A673 (cell line): ENCODE measurements at regions of chr6 and their contacts with region 1.

Region 1: GRCh38 chr6:27545271-27546046 is 72.6 kb upstream of the ZNF184 start:
- DNase-seq: peak; percentile 87
- H3K4me3 ChIP-seq: peak overlapping the region; percentile 48
- H3K27ac ChIP-seq: no peak overlapping the region
- H3K4me1 ChIP-seq: no peaks in the 10 kb centered on the region
- H3K27me3 ChIP-seq: no peaks in the 10 kb centered on the region
- CTCF ChIP-seq: no peak

Region 2: DNA sequence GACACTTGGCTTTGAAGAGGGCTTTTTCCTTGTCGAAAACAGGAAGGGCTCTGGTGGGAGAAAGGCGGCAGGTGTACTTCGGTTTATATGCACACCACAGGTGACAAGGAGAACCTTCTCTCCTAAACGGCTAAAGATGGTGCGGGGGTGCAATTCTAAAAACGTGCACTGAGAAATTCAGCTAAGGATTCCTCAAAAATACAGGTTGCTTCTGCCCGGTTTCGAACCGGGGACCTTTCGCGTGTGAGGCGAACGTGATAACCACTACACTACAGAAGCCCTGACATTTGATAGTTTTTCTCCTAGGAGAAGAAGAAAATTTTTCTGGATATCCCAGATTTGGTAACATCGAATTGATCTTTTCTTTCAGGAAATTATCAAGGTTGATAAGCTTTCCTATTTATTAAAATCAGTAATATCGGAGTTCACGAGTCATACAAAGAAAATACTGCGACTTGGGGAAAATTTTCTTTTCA is 265.4 kb before region 1 on chr6:
- CTCF ChIA-PET with region 1: no interaction called
- POLR2A ChIA-PET with region 1: no interaction called
- intact Hi-C with region 1: no loop called
- DNase-seq: peak; percentile 82
- H3K4me3 ChIP-seq: peak overlapping the region; percentile 54
- H3K27ac ChIP-seq: peak overlapping the region; percentile 26
- H3K4me1 ChIP-seq: peaks cover 6% of the 10 kb centered on the region
- H3K27me3 ChIP-seq: no peaks in the 10 kb centered on the region
- CTCF ChIP-seq: no peak

Region 3: GRCh38 chr6:27374824-27375612 is 170.4 kb before region 1 on chr6:
- CTCF ChIA-PET with region 1: no interaction called
- POLR2A ChIA-PET with region 1: no interaction called
- intact Hi-C with region 1: no loop called
- DNase-seq: peak; percentile 82
- H3K4me3 ChIP-seq: peak overlapping the region; percentile 59
- H3K27ac ChIP-seq: no peak overlapping the region
- H3K4me1 ChIP-seq: no peaks in the 10 kb centered on the region
- H3K27me3 ChIP-seq: no peaks in the 10 kb centered on the region
- CTCF ChIP-seq: no peak

Region 4: GRCh38 chr6:27479319-27480182 is 65.9 kb before region 1 on chr6:
- CTCF ChIA-PET with region 1: no interaction called
- POLR2A ChIA-PET with region 1: no interaction called
- intact Hi-C with region 1: loop called (anchors 2 kb)
- DNase-seq: peak; percentile 91
- H3K4me3 ChIP-seq: peak overlapping the region; percentile 62
- H3K27ac ChIP-seq: peak overlapping the region; percentile 71
- H3K4me1 ChIP-seq: peaks cover 4% of the 10 kb centered on the region
- H3K27me3 ChIP-seq: no peaks in the 10 kb centered on the region
- CTCF ChIP-seq: no peak

Region 5: GRCh38 chr6:27518881-27519795 is 26.3 kb before region 1 on chr6:
- CTCF ChIA-PET with region 1: no interaction called
- POLR2A ChIA-PET with region 1: no interaction called
- intact Hi-C with region 1: loop called (anchors 2 kb)
- DNase-seq: peak; percentile 92
- H3K4me3 ChIP-seq: peak overlapping the region; percentile 70
- H3K27ac ChIP-seq: peak overlapping the region; percentile 77
- H3K4me1 ChIP-seq: peaks cover 7% of the 10 kb centered on the region
- H3K27me3 ChIP-seq: peaks cover 10% of the 10 kb centered on the region
- CTCF ChIP-seq: peak; percentile 75

Region 6: DNA sequence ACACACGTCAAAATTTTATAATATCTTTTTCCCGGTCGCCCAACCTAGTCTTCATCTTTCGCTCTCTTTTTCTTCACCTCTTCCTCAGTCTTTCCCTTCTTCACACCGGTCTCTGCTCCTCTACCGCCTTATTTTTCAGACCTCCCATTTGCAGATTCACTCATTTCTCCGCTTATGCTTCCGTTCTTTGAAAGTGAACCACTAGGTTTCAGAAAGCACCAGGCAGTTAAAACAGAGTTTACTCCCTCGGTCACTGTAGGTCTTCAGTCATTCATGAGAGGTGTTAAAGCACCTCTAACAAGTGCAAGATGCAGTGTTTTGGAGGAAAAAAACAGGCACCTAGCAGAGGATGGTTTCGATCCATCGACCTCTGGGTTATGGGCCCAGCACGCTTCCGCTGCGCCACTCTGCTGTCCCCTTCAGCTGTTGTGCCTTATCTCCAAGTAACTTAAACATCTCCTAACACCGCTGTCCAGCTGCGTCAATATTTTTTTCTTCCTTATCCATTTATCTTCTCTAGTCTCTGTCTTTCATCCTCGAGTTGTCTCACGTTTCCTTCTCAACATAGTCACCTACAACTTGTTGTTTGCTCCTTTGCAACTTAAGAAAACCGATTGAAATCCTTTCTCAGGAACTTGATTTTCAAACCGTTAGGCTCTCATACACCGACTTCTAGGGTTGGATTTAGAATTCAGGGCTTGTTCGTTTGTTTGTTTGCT is 47.2 kb after region 1 on chr6:
- CTCF ChIA-PET with region 1: no interaction called
- POLR2A ChIA-PET with region 1: no interaction called
- intact Hi-C with region 1: loop called (anchors 5 kb)
- DNase-seq: peak; percentile 94
- H3K4me3 ChIP-seq: peak overlapping the region; percentile 51
- H3K27ac ChIP-seq: no peak overlapping the region
- H3K4me1 ChIP-seq: no peaks in the 10 kb centered on the region
- H3K27me3 ChIP-seq: no peaks in the 10 kb centered on the region
- CTCF ChIP-seq: no peak

Region 7: GRCh38 chr6:28335564-28336283 is 790.3 kb after region 1 on chr6 and contains the start of gene ZSCAN31:
- CTCF ChIA-PET with region 1: no interaction called
- POLR2A ChIA-PET with region 1: interaction called, 10 read pairs
- intact Hi-C with region 1: no loop called
- DNase-seq: peak; percentile 97
- H3K4me3 ChIP-seq: peak within 1 kb of the TSS; percentile 55
- H3K27ac ChIP-seq: peak within 1 kb of the TSS; percentile 97
- H3K4me1 ChIP-seq: no peaks in the 10 kb centered on the region
- H3K27me3 ChIP-seq: no peaks in the 10 kb centered on the region
- CTCF ChIP-seq: no peak
- total RNA-seq, gene ZSCAN31: 3.5 and 4.3 TPM in 2 replicates